ENCODE measurements at regions of chr1 and their contacts with region 1.

Region 1: GRCh38 chr1:173581383-173582079 is 21.3 kb downstream of the SLC9C2 start:
- DNase-seq: no peak
- ATAC-seq: peak; percentile 69
- H3K4me3 Mint-ChIP-seq: no peak overlapping the region
- H3K27ac Mint-ChIP-seq: no peak overlapping the region
- H3K4me1 Mint-ChIP-seq: peaks cover 5% of the 10 kb centered on the region
- H3K27me3 Mint-ChIP-seq: peaks cover 2% of the 10 kb centered on the region

Region 2: DNA sequence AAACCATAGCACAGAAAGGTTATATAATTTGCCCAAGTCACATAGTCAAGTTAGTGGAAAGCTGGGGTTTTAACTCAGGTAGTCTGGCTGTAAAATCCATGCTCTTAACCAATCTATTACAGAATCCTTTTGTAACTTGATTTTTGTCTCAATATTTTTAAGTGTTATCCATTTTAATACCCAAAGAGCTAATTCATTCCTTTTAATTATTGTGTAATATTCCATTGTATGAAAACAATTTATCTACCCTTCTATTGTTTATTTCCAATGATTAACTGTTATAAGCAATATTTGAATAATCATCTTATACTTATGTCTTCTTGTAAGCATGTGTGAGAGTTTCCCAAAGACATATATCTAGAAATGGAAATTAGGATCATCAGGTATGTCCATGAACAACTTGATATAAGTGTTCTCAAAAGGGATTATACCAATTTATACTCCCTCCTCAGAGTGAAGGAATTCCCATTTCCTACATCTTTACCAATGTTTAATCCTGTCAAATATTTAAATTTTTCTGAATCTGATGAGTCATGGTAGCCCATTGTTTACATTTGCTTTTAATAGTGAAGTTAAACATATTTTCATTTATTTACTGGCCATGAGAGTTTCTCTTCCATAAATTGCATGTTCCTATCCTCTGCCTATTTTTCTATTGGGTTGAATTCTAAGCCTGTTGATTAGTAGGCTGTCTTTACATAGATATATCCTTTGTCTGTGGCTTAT is 67.5 kb after region 1 on chr1:
- CTCF ChIA-PET with region 1: no interaction called
- POLR2A ChIA-PET with region 1: no interaction called
- intact Hi-C with region 1: loop called in 1 of 2 experiments (anchors 10 kb)
- DNase-seq: no peak
- ATAC-seq: no peak
- H3K4me3 Mint-ChIP-seq: no peak overlapping the region
- H3K27ac Mint-ChIP-seq: no peak overlapping the region
- H3K4me1 Mint-ChIP-seq: no peaks in the 10 kb centered on the region
- H3K27me3 Mint-ChIP-seq: no peaks in the 10 kb centered on the region

Region 3: DNA sequence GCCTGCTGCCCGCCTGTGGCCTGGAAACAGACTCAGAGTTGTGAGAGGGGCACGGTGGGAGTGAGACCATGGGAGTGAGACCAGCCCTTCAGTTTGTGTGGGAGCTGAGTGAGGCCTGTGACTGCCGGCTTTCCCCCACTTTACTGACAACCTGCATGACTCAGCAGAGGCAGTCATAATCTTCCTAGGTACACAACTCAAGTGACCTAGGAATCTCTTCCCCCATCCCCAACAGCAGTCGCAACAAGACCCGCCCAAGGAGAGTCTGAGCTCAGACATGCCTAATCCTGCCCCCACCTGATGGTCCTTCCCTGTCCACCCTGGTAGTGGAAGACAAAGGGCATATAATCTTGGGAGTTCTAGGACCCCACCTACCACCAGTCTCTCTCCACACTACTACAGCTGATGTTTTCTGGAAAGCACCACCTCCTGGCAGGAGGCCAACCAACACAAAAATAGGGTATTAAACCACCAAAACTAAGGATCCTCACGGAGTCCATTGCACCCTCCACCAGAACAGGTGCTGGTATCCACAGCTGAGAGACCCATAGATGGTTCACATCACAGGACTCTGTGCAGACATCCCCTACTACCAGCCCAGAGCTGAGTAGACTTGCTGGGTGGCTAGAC is 177.6 kb after region 1 on chr1:
- CTCF ChIA-PET with region 1: no interaction called
- POLR2A ChIA-PET with region 1: interaction called, 11 read pairs
- intact Hi-C with region 1: no loop called
- DNase-seq: no peak
- ATAC-seq: no peak
- H3K4me3 Mint-ChIP-seq: no peak overlapping the region
- H3K27ac Mint-ChIP-seq: no peak overlapping the region
- H3K4me1 Mint-ChIP-seq: peaks cover 2% of the 10 kb centered on the region
- H3K27me3 Mint-ChIP-seq: no peaks in the 10 kb centered on the region

Region 4: GRCh38 chr1:173871500-173871899 is 290.0 kb after region 1 on chr1:
- CTCF ChIA-PET with region 1: no interaction called
- POLR2A ChIA-PET with region 1: no interaction called
- intact Hi-C with region 1: no loop called
- DNase-seq: no peak
- ATAC-seq: no peak
- H3K4me3 Mint-ChIP-seq: no peak overlapping the region
- H3K27ac Mint-ChIP-seq: peak overlapping the region; percentile 86
- H3K4me1 Mint-ChIP-seq: peaks cover 41% of the 10 kb centered on the region
- H3K27me3 Mint-ChIP-seq: no peaks in the 10 kb centered on the region